ENCODE measurements at regions of chr1 and their contacts with region 1.

Region 1: DNA sequence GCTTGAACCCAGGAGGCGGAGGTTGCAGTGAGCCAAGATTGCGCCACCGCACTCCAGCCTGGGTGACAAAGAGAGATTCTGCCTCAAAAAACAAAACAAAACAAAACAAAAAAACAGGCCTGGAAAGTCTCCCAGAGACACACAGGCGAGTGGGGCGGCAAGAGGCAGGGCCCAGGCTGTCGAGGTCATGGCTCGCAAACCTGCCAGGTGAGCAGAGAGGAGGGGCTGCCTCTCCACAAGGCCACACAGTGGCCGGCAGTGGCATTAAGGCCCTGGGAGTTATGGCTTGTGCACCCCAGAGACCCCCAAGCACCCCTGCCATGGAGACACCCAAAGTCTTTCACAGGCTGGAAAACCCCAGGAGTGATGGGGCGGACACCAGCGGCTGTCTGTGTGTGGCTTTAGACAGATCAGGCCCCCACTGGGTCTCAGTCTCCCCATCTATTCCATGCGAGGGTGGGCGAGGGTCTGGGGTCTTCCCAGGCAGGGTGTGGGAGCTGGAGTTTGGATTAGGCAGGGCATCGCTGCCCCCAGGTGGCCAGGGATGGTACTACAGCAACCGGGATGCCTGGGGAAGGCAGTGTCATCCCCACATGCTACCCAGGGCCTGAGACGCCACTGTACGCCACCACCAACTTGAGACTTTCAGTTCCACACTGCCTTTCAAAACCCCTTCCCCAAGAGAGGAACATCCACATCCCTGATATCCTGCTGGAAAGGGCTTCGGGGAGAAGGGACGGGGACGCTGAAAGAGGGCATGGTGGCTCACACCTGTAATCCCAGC is 7.3 kb upstream of the CTRC start:
- DNase-seq: peak; percentile 77
- ATAC-seq: peak; percentile 74 to 77
- H3K4me3 ChIP-seq: no peak overlapping the region
- H3K27ac ChIP-seq: no peak overlapping the region
- H3K4me1 ChIP-seq: peaks cover 5% of the 10 kb centered on the region
- H3K27me3 ChIP-seq: no peaks in the 10 kb centered on the region
- CTCF ChIP-seq: peak; percentile 94

Region 2: GRCh38 chr1:15328351-15329103 is 102.5 kb before region 1 on chr1:
- intact Hi-C with region 1: loop called (anchors 5 kb)
- DNase-seq: peak; percentile 54
- ATAC-seq: peak in 1 of 2 donors; percentile 40
- H3K4me3 ChIP-seq: peak overlapping the region; percentile 6
- H3K27ac ChIP-seq: no peak overlapping the region
- H3K4me1 ChIP-seq: peaks cover 23% of the 10 kb centered on the region
- H3K27me3 ChIP-seq: no peaks in the 10 kb centered on the region
- CTCF ChIP-seq: no peak

Measured in lower lobe of right lung (tissue), 2 donors.